Transverse colon (tissue), 4 donors: ENCODE measurements at regions of chr10 and their contacts with region 1.

Region 1: GRCh38 chr10:68348265-68348741 is 15.6 kb upstream of the PBLD start:
- DNase-seq: peak; percentile 38
- H3K4me3 ChIP-seq: no peak overlapping the region
- H3K27ac ChIP-seq: no peak overlapping the region
- H3K4me1 ChIP-seq: no peaks in the 10 kb centered on the region
- H3K27me3 ChIP-seq: no peaks in the 10 kb centered on the region
- CTCF ChIP-seq: peak; percentile 51 to 74 (median 68)
- EP300 ChIP-seq: no peak
- POLR2A ChIP-seq: no peak

Region 2: DNA sequence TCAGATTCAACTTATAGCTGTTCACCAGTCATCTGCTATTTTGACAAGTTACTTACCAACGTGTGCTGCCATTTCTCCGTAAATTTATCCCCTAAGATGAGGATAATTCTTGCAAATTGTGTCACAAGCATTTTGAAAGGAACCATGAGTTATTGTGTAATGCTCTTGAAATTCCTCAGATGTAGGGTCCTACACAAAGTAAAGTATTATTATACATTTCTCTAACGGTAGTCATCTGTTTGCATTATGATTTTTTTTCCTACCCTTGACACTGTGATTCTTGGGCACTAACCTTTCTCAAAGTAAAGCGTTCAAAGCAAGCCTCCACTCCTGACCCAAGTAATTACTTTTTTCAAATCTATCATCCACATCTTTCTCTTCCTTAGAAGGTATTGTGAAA is 281.3 kb before region 1 on chr10:
- in situ Hi-C with region 1: no loop called
- intact Hi-C with region 1: no loop called
- DNase-seq: no peak
- H3K4me3 ChIP-seq: no peak overlapping the region
- H3K27ac ChIP-seq: no peak overlapping the region
- H3K4me1 ChIP-seq: peaks cover 0 to 12% (median 1%) of the 10 kb centered on the region in 4 donors
- H3K27me3 ChIP-seq: no peaks in the 10 kb centered on the region
- CTCF ChIP-seq: no peak
- EP300 ChIP-seq: no peak
- POLR2A ChIP-seq: no peak

Region 3: GRCh38 chr10:68212721-68213352 is 135.5 kb before region 1 on chr10:
- in situ Hi-C with region 1: no loop called
- intact Hi-C with region 1: loop called (anchors 10 kb)
- DNase-seq: no peak
- H3K4me3 ChIP-seq: no peak overlapping the region
- H3K27ac ChIP-seq: no peak overlapping the region
- H3K4me1 ChIP-seq: no peaks in the 10 kb centered on the region
- H3K27me3 ChIP-seq: no peaks in the 10 kb centered on the region
- CTCF ChIP-seq: peak; percentile 54 to 64 (median 61)
- EP300 ChIP-seq: no peak
- POLR2A ChIP-seq: no peak

Region 4: DNA sequence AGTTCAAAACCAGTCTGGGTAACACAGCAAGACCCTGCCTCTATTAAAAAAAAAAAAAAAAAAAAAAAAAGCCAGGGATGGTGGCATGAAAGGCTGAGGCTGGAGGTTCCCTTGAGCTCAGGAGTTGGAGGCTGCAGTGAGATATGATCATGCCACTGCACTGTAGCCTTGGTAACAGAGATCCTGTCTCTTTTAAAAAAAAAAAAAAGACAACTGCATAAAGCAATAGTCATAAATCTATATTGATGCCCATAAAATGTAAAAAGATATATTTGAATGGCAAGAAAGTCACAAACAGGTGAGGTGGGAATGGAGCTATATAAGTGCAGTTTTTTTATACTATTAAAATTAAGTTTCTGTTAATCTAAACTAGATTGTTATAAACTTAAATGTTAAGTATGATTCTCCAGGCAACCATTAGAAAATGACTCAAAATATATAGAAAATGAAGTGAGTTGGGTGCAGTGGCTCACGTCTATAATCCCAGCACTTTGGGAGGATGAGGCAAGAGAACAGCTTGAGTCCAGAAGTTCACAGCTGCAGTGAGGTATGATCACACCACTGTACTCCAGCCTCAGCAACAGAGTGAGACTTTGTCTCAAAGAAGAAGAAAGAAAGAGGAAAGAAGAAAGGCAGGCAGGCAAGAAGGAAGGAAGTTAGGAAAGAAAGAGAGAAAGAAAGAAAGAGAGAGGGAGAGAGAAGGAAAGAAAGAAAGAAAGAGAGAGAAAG is 29.8 kb before region 1 on chr10:
- in situ Hi-C with region 1: no loop called
- intact Hi-C with region 1: no loop called
- DNase-seq: peak; percentile 44
- H3K4me3 ChIP-seq: no peak overlapping the region
- H3K27ac ChIP-seq: peak overlapping the region; percentile 71 to 78 (median 72)
- H3K4me1 ChIP-seq: peaks cover 0 to 30% (median 2%) of the 10 kb centered on the region in 4 donors
- H3K27me3 ChIP-seq: no peaks in the 10 kb centered on the region
- CTCF ChIP-seq: no peak
- EP300 ChIP-seq: no peak
- POLR2A ChIP-seq: no peak